Breast epithelium (tissue), 4 donors: ENCODE measurements at regions of chr6 and their contacts with region 1.

Region 1: GRCh38 chr6:18327626-18328025 is 59.5 kb upstream of the RNF144B start:
- DNase-seq: no peak
- H3K4me3 ChIP-seq: no peak overlapping the region
- H3K27ac ChIP-seq: peak overlapping the region in 1 of 2 donors; percentile 68
- H3K4me1 ChIP-seq: no peaks in the 10 kb centered on the region
- H3K27me3 ChIP-seq: no peaks in the 10 kb centered on the region
- CTCF ChIP-seq: no peak
- POLR2A ChIP-seq: no peak

Region 2: DNA sequence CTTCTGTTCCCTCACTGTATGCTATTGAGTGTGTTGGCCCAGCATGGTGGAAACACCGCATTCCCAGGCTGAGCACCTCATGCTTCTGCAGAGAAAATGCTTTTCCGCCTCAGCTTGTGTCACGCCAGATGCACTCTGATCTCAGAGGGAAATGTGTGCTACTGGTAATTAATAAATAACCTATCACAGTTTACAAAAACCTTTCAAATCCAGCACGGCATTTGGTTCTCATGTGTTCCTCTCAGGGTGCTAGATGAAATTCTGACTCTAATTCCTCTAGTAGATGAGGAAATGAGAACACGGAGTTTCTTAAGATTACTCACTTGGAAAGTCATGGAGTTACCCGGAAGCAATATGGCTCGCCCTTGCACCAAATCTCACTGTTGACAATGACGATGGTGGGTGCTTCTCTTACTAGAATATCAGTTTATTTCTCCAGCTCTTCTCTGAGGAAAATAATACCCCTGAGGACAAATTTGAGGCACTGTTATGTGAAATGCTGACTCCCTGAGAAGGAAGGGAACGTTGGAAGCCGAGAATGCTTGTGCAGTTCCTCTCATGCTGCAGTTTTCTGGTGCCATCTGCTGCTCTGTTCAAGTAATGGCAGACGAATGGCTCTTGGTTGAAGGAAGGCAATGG is 176.1 kb after region 1 on chr6:
- intact Hi-C with region 1: loop called (anchors 5 kb)
- DNase-seq: peak in 1 of 2 donors; percentile 56
- H3K4me3 ChIP-seq: peak overlapping the region; percentile 20 to 60 (median 38)
- H3K27ac ChIP-seq: peak overlapping the region in 1 of 2 donors; percentile 20
- H3K4me1 ChIP-seq: no peaks in the 10 kb centered on the region
- H3K27me3 ChIP-seq: no peaks in the 10 kb centered on the region
- CTCF ChIP-seq: peak; percentile 66 to 91 (median 86)
- POLR2A ChIP-seq: no peak